ENCODE measurements at regions of chr1 and their contacts with region 1.

Region 1: DNA sequence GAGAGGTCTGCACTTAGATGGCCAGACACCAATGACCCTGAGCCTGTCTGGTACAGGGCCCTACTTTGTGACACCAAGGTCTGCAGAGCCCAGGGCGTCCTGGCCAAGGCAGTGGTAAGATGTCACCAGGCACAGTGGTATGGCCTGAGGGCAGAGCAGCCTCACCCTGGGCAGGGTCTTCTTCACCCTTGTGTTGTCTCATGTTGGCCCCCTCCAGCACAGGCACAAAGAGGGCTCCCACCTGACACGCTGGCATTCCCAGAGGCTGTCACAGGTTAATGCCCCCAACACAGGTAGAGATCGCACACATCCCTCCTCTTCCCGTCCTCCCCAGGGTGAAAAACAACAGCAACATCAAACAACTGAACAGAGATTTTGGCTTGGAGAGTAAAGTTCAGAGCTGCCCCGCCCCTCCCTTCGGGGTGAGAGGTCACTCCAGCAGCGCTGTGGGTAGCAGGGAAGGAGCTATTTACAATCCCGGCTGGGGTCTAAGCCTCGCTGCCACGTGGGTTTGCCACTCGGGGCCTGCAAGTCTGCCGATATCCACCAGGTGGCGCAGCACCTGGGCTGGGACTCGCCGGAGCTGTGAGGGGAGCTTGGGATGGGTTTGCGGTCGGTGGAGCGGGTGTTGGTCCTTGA is 12.6 kb downstream of the EFNA3 start:
- DNase-seq: peak; percentile 78
- ATAC-seq: peak; percentile 79
- H3K4me3 ChIP-seq: peak overlapping the region in 2 of 3 experiments; percentile 9 to 54; a peak in 2 of 6 replicates
- H3K27ac ChIP-seq: peak overlapping the region; percentile 52
- H3K4me1 ChIP-seq: peaks cover 77% of the 10 kb centered on the region
- H3K27me3 ChIP-seq: peaks cover 0 to 2% of the 10 kb centered on the region in 2 experiments; a peak in 1 of 5 replicates
- CTCF ChIP-seq: peak; percentile 98
- EP300 ChIP-seq: no peak; a peak in 1 of 4 replicates
- POLR2A ChIP-seq: no peak
- RAD21 ChIP-seq: peak; percentile 95

Region 2: DNA sequence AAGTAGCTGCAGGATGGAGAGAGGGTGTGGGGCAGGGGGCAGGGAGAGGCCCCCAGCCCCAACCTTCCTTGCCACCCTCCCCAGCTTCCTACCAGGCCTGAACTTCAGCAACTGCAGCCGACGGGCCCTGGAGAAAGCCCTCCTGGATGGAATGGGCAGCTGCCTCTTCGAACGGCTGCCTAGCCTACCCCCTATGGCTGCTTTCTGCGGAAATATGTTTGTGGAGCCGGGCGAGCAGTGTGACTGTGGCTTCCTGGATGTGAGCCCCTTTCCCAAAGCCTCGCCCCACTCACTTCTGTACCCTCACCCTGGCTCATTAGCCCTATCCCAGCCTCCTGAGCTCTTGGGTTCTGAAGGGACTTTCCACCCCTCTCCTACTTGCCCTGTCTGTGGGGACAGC is 34.1 kb before region 1 on chr1:
- CTCF ChIA-PET with region 1: no interaction called
- POLR2A ChIA-PET with region 1: no interaction called
- in situ Hi-C with region 1: no loop called
- intact Hi-C with region 1: no loop called
- DNase-seq: no peak
- ATAC-seq: no peak
- H3K4me3 ChIP-seq: no peak overlapping the region
- H3K27ac ChIP-seq: no peak overlapping the region
- H3K4me1 ChIP-seq: peaks cover 16% of the 10 kb centered on the region
- H3K27me3 ChIP-seq: no peaks in the 10 kb centered on the region
- CTCF ChIP-seq: no peak
- EP300 ChIP-seq: no peak
- POLR2A ChIP-seq: no peak
- RAD21 ChIP-seq: no peak

Region 3: GRCh38 chr1:155135415-155136028 is 44.3 kb after region 1 on chr1 and contains the start of gene SLC50A1:
- CTCF ChIA-PET with region 1: interaction called, 18 read pairs
- POLR2A ChIA-PET with region 1: interaction called, 36 read pairs
- in situ Hi-C with region 1: no loop called
- intact Hi-C with region 1: loop called (anchors 1 kb)
- DNase-seq: peak; percentile 86
- ATAC-seq: peak; percentile 81
- H3K4me3 ChIP-seq: peak within 1 kb of the TSS; percentile 67 to 84 (median 79)
- H3K27ac ChIP-seq: peak within 1 kb of the TSS; percentile 89
- H3K4me1 ChIP-seq: peaks cover 83% of the 10 kb centered on the region
- H3K27me3 ChIP-seq: no peaks in the 10 kb centered on the region; a peak in 1 of 5 replicates
- CTCF ChIP-seq: no peak
- EP300 ChIP-seq: no peak; a peak in 1 of 4 replicates
- POLR2A ChIP-seq: peak in 1 of 2 experiments; percentile 75; a peak in 2 of 4 replicates
- RAD21 ChIP-seq: peak; percentile 48; the same call in 1 of the 2 replicates
- total RNA-seq, gene SLC50A1: 16.4 and 22.5 TPM in 2 replicates

Region 4: DNA sequence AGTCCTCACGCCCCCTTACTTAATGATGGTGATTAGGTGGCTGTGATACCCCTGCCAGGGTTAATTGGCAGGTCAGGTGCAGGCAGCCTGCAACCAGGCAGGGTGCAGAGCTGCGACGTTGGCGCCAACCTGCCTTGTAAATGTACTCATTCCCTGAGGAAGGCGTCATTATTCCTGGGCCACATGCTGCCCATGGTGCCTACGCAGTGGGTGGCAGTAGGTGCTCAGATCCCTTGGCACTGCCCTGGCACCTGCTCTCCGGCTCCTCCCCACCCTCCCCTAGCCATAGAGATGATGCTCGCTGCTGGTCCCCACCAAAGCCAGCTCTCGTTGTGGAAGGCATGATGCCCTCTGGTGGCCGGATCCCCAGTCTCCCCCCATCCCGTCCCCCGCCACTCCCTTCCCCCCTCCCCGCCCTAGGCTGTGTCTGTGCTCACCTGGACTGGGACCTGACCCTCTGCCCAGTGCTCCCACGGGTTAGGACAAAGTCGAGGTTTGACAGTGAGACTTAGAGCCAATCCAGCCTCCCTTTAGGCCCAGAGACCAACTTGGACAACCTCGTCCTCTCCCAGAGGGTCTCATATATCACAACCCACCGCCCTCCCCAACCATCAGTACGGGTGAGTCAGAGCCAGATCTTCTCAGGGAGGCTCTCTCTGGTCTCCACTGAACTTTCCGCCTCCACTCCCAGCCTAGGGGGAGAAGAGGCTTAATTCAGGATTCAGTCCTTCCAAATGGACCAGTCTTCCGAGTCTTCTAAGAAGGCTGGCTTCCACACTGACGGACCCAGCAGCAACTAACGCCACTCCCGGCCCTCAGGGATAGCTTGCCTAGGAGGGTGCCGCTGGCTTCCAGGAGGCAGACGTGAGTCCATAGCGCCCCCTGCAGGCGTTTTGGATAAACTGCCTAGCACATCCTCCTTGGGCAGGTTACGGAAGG is 76.2 kb after region 1 on chr1:
- CTCF ChIA-PET with region 1: interaction called, 165 read pairs
- POLR2A ChIA-PET with region 1: interaction called, 28 read pairs
- in situ Hi-C with region 1: loop called (anchors 5 kb)
- intact Hi-C with region 1: loop called (anchors 1 kb)
- DNase-seq: peak; percentile 82
- ATAC-seq: peak; percentile 87
- H3K4me3 ChIP-seq: peak overlapping the region; percentile 37 to 75 (median 48); a peak in 5 of 6 replicates
- H3K27ac ChIP-seq: no peak overlapping the region
- H3K4me1 ChIP-seq: peaks cover 36% of the 10 kb centered on the region
- H3K27me3 ChIP-seq: 0 out of 5 replicates have a peak, but pooled peaks cover 0 to 8% of the 10 kb centered on the region in 2 experiments
- CTCF ChIP-seq: peak; percentile 95
- EP300 ChIP-seq: no peak
- POLR2A ChIP-seq: no peak
- RAD21 ChIP-seq: peak; percentile 97

Measured in HepG2 (cell line).